ENCODE measurements at regions of chr13 and their contacts with region 1.

Region 1: GRCh38 chr13:90839061-90839460 is 508.4 kb upstream of the MIR17HG start:
- DNase-seq: peak; percentile 43 to 74
- H3K4me3 ChIP-seq: no peak overlapping the region
- H3K27ac ChIP-seq: peak overlapping the region; percentile 87
- H3K4me1 ChIP-seq: peaks cover 31% of the 10 kb centered on the region
- H3K27me3 ChIP-seq: no peaks in the 10 kb centered on the region
- CTCF ChIP-seq: no peak

Region 2: GRCh38 chr13:90445179-90445578 is 393.9 kb before region 1 on chr13:
- CTCF ChIA-PET with region 1: no interaction called
- POLR2A ChIA-PET with region 1: no interaction called
- intact Hi-C with region 1: loop called (anchors 1 kb)
- DNase-seq: peak; percentile 67 to 74
- H3K4me3 ChIP-seq: no peak overlapping the region
- H3K27ac ChIP-seq: peak overlapping the region; percentile 24
- H3K4me1 ChIP-seq: peaks cover 32% of the 10 kb centered on the region
- H3K27me3 ChIP-seq: no peaks in the 10 kb centered on the region
- CTCF ChIP-seq: no peak

Measured in PC-9 (cell line).